Head of caudate nucleus (tissue), 42 donors: ENCODE measurements at regions of chr17 and their contacts with region 1.

Region 1: DNA sequence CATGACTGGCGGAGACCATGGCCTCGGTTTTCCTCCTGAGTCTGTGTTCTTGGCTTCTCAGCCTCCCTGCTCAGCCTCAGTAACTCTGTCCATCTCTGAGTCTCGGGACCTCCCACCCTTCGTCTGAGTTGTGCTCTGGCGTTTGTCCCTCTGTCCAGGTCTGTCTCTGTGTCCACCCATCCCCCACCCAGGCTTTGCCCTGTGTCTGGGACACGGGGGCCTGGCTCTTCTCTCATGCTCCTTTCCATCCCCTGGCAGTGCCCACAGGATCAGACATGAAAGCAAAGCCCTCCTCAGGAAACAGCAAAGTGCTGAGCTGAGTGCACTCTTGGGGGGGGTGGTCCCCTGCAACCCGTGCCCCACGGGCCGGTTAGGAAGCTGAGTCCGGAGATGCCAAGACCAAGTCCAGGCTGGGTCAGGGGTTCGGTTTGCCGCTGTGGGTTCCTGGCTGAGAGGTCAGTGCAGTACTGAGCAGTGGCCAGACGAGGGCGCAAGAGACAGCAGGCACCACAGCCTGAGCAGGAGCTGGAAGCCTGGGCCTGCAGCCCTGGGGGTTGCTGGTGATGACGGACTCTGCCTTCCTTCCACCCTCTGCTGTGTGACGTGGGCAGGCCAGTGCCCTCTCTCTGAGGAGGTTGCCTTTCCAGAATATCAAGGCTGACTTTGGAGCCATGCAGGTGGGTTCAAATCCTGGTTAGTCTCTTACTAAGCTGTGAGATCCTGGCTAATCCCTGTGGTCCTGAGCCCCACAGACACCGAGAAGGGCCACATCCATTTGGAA is 2.5 kb downstream of the P2RX1 start:
- DNase-seq: peak; percentile 60 to 91 (median 84)

Region 2: GRCh38 chr17:4004517-4005295 is 91.0 kb after region 1 on chr17:
- intact Hi-C with region 1: loop called (anchors 10 kb)
- DNase-seq: peak in 38 of 42 donors; percentile 24 to 80 (median 55)